ENCODE measurements at regions of chr6 and their contacts with region 1.

Region 1: DNA sequence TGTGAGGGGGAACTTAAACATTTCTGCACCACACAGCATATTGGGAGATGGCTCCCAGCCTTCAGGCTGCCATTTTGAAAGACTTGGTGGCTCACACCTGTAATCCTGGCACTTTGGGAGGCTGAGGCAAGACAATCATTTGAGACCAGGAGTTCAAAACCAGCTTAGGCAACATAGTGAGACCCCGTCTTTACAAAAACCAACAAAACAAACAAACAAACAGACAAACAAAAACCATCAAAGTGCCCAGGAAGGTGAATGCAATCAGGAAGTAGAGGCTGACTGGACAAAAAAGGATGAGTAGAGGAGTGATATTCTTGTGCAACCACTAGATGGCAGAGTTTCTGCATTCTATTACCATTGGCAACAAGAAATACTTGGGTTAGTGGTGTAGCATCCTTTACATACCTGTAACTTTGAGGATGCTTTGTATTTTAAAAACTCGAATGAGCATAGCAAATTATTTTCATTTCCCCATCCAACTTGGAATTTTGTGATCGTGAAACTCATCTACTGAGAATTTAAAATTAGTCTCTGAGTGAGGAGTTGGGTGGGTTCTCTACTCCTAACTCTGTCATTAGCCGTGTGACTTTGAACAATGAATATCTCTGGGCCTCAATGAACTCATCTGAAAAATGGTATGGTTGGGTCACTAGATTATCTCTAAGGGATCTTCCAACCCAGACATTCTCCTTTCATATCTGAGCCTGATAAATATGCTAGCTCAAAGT is 84.4 kb downstream of the CRYBG1 start:
- DNase-seq: peak; percentile 47
- H3K4me3 Mint-ChIP-seq: no peak overlapping the region
- H3K27ac Mint-ChIP-seq: no peak overlapping the region
- H3K4me1 Mint-ChIP-seq: peaks cover 18% of the 10 kb centered on the region
- H3K27me3 Mint-ChIP-seq: peaks cover 28% of the 10 kb centered on the region

Region 2: GRCh38 chr6:106456756-106457155 is 11.8 kb after region 1 on chr6:
- CTCF ChIA-PET with region 1: no interaction called
- POLR2A ChIA-PET with region 1: no interaction called
- DNase-seq: no peak
- H3K4me3 Mint-ChIP-seq: no peak overlapping the region
- H3K27ac Mint-ChIP-seq: no peak overlapping the region
- H3K4me1 Mint-ChIP-seq: no peaks in the 10 kb centered on the region
- H3K27me3 Mint-ChIP-seq: peaks cover 2% of the 10 kb centered on the region

Region 3: DNA sequence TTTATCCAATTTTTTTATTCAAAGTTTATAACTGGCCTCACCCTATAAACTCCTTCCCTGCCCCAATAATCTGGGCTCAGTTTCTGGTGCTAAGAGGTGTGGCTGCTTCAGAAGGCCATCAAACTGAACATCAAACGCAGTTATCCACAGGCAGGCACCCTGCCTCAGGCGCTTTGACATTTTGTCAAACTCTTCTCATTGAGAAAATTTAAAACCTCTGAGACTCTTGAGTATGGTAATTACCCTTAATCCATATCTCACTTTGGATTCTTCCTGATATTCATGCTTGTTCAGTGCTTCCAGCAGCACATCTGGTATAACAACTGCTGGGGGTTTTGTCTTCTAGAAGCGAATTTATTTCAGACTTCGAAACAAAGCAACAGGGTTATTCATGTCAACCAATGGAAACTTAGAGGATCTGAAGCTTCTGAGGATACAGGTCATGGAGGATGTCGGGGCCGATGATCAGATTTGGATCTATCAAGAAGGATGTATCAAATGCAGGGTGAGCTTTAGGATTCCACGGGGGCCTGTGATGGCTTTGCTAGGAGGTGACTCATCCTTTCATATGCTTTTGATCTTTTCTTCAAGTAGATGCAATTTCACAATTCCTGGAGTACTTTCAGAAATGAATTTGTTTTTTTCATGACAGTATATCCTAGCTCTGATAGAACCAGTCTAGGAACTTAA is 116.2 kb after region 1 on chr6:
- CTCF ChIA-PET with region 1: interaction called, 31 read pairs
- POLR2A ChIA-PET with region 1: no interaction called
- DNase-seq: no peak
- H3K4me3 Mint-ChIP-seq: no peak overlapping the region
- H3K27ac Mint-ChIP-seq: no peak overlapping the region
- H3K4me1 Mint-ChIP-seq: peaks cover 18% of the 10 kb centered on the region
- H3K27me3 Mint-ChIP-seq: no peaks in the 10 kb centered on the region